A549 (cell line): ENCODE measurements at regions of chr9 and their contacts with region 1.

Region 1: DNA sequence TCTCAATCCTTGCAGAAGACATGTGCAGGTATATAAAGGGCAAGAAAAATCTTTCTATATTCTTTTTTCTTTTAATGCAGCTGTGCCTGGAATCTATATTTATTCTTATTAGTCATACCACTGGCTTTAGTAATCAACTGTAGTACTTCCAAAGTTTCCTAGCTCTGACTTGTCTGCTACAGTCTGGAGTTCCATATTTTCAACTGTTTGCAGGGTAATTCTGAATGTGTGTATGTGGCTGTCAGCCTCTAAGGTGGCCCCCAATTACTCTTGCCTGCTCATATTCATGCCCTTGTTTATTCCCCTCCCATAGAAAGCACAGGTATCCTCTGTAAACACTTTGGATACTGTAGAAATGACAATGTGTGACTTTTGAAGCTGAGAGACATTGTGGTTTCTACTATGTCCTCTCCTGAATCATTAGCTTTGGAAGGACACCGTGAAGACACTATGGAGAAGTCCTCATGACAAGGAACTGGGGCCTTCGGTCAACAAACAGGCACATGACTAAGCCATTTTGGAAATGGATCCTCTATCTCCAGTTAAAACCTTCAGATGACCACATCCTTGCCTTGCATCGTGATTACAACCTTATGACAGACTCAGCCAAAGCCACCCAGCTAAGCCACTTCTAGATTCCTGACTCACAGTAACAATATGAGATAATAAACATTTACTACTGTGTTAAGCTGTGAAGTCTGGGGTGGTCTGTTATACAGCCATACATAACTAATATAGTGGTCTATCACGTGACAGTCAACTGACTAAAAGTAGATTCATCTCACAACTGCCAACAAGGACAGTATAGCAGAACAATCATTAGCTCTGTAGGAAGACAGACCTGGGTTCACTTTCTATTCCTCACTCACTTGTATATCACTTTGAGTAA is 49.5 kb upstream of the SUSD1 start:
- DNase-seq: no peak
- ATAC-seq: peak; percentile 42 to 47; a peak in 3 of 6 replicates
- H3K4me3 ChIP-seq: no peak overlapping the region
- H3K27ac ChIP-seq: 0 out of 6 replicates have a peak overlapping the region, but pooled peaks of 1 of the 2 experiments have one; percentile 23
- H3K4me1 ChIP-seq: peaks cover 15% of the 10 kb centered on the region
- CTCF ChIP-seq: no peak
- EP300 ChIP-seq: no peak
- POLR2A ChIP-seq: no peak
- RAD21 ChIP-seq: no peak

Region 2: GRCh38 chr9:112207451-112207850 is 17.2 kb before region 1 on chr9:
- CTCF ChIA-PET with region 1: interaction called, 10 read pairs
- POLR2A ChIA-PET with region 1: no interaction called
- DNase-seq: no peak
- ATAC-seq: no peak
- H3K4me3 ChIP-seq: no peak overlapping the region
- H3K27ac ChIP-seq: no peak overlapping the region
- H3K4me1 ChIP-seq: no peaks in the 10 kb centered on the region
- CTCF ChIP-seq: no peak
- EP300 ChIP-seq: no peak
- POLR2A ChIP-seq: no peak
- RAD21 ChIP-seq: no peak

Region 3: GRCh38 chr9:112212926-112213325 is 11.7 kb before region 1 on chr9:
- CTCF ChIA-PET with region 1: interaction called, 13 read pairs
- POLR2A ChIA-PET with region 1: no interaction called
- DNase-seq: no peak
- ATAC-seq: no peak
- H3K4me3 ChIP-seq: no peak overlapping the region
- H3K27ac ChIP-seq: no peak overlapping the region
- H3K4me1 ChIP-seq: no peaks in the 10 kb centered on the region
- CTCF ChIP-seq: no peak
- EP300 ChIP-seq: no peak
- POLR2A ChIP-seq: no peak
- RAD21 ChIP-seq: no peak